SK-N-SH (cell line): ENCODE measurements at regions of chrX and their contacts with region 1.

Region 1: GRCh38 chrX:40651620-40652223 is 4.4 kb upstream of the CXorf38 start:
- DNase-seq: peak; percentile 48
- H3K4me3 ChIP-seq: no peak overlapping the region
- H3K27ac ChIP-seq: no peak overlapping the region
- H3K4me1 ChIP-seq: peaks cover 3 to 4% of the 10 kb centered on the region in 2 experiments; a peak in 2 of 4 replicates
- H3K27me3 ChIP-seq: no peaks in the 10 kb centered on the region
- CTCF ChIP-seq: peak; percentile 90
- EP300 ChIP-seq: no peak
- RAD21 ChIP-seq: peak; percentile 92

Region 2: DNA sequence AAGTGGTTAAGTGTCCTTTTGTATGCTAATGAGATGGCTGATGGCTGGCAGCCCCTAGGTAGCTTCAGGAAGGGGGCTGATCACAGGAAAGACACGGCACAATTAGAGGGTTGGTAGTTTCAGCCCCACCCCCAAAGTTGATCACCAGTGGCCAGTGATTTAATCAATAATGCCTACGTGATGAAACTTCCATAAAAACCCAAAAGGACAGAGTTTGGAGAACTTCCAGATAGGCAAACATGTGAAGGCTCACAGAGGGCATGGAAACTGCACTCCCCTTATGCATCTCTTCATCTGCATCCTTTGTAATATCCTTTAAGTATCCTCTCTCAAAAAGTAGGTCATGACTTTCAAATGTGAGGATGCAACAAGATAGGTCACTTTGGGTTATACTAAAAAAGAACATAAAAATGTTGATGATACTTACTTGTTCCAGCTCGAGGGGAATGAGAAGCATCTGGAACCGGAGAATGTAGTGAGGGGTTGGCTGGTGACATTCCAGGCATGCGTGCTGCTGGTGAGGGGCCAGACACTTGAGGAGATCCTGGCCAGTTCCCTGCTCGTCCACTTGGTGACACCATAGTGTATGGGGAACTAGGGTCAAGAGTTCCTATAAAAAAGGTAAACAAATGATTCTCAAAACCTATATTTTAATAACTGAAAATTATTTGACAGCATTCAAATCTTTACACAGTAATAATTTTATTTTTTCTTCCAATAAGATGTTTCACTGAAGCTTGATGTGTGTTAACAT is 12.3 kb after region 1 on chrX:
- CTCF ChIA-PET with region 1: interaction called, 14 read pairs
- POLR2A ChIA-PET with region 1: no interaction called
- DNase-seq: peak; percentile 26
- H3K4me3 ChIP-seq: no peak overlapping the region
- H3K27ac ChIP-seq: no peak overlapping the region
- H3K4me1 ChIP-seq: no peaks in the 10 kb centered on the region
- H3K27me3 ChIP-seq: no peaks in the 10 kb centered on the region
- CTCF ChIP-seq: peak; percentile 48
- EP300 ChIP-seq: no peak
- RAD21 ChIP-seq: 0 out of 2 replicates have a peak, but pooled peaks have one; percentile 23

Region 3: DNA sequence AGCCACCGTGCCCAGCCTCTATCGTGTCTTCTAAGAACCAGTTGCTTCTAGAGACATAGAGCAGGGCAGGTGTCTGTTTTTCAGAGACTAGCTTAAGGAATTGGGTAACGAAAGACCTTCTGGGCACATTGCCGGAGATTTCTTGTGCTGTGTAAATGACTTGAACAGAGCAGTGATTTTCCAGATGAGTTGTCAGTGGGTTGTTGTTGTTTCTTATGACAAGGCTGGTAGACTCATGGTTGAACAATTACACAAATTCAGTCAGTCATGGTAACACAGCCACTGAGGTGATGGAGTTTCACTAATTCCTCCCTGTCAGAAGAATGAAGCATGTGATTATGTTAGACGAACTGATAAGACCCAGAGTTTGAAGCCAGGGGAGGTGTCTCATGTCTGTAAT is 661.7 kb after region 1 on chrX:
- CTCF ChIA-PET with region 1: no interaction called
- POLR2A ChIA-PET with region 1: no interaction called
- DNase-seq: no peak
- H3K4me3 ChIP-seq: no peak overlapping the region
- H3K27ac ChIP-seq: no peak overlapping the region
- H3K4me1 ChIP-seq: peaks cover 0 to 3% of the 10 kb centered on the region in 2 experiments; a peak in 1 of 4 replicates
- H3K27me3 ChIP-seq: no peaks in the 10 kb centered on the region
- CTCF ChIP-seq: no peak
- EP300 ChIP-seq: no peak
- RAD21 ChIP-seq: no peak